Mammary epithelial cell (primary cell): ENCODE measurements at regions of chr6 and their contacts with region 1.

Region 1: DNA sequence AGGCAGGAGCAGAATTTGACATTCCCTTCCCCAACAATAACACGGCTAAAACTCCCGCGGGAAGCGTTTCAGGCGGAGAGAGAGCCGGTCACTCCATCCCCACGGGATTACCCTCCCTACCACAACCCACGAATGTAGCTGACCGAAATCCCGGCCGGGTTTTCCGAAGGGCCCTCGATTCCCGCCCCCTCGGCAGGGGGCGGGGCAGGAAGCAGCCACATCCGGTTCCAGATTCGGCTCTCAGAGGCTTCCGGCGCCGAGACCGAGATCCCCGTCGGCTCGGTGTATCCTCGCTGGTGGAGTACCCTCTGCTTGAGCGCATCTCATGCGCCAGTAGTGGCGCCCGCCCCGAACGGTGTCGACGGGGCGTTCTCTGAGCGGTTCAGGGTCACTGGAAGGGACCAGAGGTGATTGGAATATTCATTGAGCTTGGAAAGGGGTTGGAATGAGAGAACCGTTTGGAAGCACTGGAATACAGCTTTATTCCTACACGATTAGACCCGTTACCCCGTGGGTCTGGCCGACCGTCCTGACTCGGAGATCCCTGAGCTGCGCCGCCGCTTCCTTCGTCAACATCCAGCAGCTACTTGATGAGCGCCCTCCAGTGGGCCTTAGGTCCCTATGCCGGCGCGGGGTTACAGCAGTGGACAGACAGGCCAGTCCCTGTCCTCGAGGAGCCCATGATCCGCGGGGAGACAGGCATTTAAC is 649 bp upstream of the RGL2 start:
- DNase-seq: peak; percentile 90
- H3K4me3 ChIP-seq: peak overlapping the region; percentile 73 to 98 (median 83)
- H3K27ac ChIP-seq: peak overlapping the region; percentile 93
- H3K4me1 ChIP-seq: peaks cover 9% of the 10 kb centered on the region
- H3K27me3 ChIP-seq: no peaks in the 10 kb centered on the region
- CTCF ChIP-seq: peak; percentile 71 to 82

Region 2: DNA sequence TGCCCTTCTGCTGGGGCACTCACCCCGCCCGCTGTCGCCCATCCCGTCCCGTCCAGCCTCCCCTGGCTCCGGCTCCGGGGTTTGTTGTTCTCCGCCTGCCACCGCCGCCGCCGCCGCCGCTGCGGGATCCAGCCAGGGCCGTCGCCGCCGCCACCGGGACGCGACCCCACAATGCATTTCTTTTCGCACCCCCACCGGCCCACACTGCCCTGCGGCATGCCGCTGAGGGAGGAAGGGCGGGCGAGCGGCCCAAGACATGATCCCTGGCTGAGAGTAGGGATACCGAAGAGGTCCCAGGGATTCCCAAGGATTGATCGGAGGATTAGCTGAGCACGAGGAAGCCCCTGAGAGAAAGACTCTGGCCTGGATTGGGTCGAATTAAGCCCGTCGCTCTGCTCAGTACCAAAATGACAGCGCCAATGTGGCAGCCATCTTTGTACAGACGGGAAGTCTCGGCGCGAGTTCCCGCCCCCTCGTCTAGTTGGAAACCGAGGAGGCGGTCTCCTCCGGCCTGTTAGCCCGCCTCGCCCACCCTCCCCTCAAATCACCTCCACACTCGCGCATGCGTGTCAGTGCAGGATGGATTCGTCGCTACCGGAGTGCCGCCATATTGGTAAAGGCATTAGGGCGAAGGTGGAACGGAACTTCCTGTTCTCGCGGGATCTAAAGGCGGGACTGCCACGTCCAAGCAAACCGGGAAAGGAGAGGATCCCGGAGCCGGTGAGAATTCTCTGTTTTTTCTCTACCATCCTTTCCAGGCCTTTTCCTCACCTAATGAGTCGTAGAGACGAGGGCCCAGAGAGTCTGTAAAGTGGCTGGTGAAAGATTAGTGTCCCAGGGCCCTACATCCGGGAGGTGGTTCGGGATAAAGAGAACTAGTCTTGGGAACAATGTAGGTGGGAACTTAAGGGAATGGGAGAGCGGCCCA is 98.9 kb before region 1 on chr6 and contains the starts of genes RXRB and SLC39A7:
- CTCF ChIA-PET with region 1: no interaction called
- dilution Hi-C with region 1: no loop called
- in situ Hi-C with region 1: no loop called
- intact Hi-C with region 1: loop called (anchors 1 kb)
- DNase-seq: peak; percentile 99
- H3K4me3 ChIP-seq: peak within 1 kb of the TSS; percentile 77 to 97 (median 78)
- H3K27ac ChIP-seq: peak within 1 kb of the TSS; percentile 88
- H3K4me1 ChIP-seq: peaks cover 23% of the 10 kb centered on the region
- H3K27me3 ChIP-seq: no peaks in the 10 kb centered on the region
- CTCF ChIP-seq: no peak
- total RNA-seq, gene RXRB: 15.0 to 30.7 TPM
- total RNA-seq, gene SLC39A7: 52.8 to 99.3 TPM

Region 3: GRCh38 chr6:33279971-33280511 is 19.4 kb before region 1 on chr6:
- CTCF ChIA-PET with region 1: no interaction called
- dilution Hi-C with region 1: no loop called
- in situ Hi-C with region 1: no loop called
- intact Hi-C with region 1: loop called (anchors 1 kb)
- DNase-seq: peak; percentile 64
- H3K4me3 ChIP-seq: no peak overlapping the region
- H3K27ac ChIP-seq: no peak overlapping the region
- H3K4me1 ChIP-seq: peaks cover 18% of the 10 kb centered on the region
- H3K27me3 ChIP-seq: no peaks in the 10 kb centered on the region
- CTCF ChIP-seq: peak; percentile 78

Region 4: GRCh38 chr6:33288921-33289748 is 10.3 kb before region 1 on chr6 and contains the starts of genes PFDN6 and WDR46:
- CTCF ChIA-PET with region 1: no interaction called
- dilution Hi-C with region 1: no loop called
- in situ Hi-C with region 1: no loop called
- intact Hi-C with region 1: loop called (anchors 1 kb)
- DNase-seq: peak; percentile 90
- H3K4me3 ChIP-seq: peak within 1 kb of the TSS; percentile 69 to 92 (median 76)
- H3K27ac ChIP-seq: peak within 1 kb of the TSS; percentile 66
- H3K4me1 ChIP-seq: peaks cover 17% of the 10 kb centered on the region
- H3K27me3 ChIP-seq: no peaks in the 10 kb centered on the region
- CTCF ChIP-seq: no peak
- total RNA-seq, gene PFDN6: 15.2 to 59.2 TPM
- total RNA-seq, gene WDR46: 55.0 to 55.3 TPM

Region 5: GRCh38 chr6:33317669-33318425 is 18.5 kb after region 1 on chr6 and contains the start of gene ZBTB22:
- CTCF ChIA-PET with region 1: interaction called, 4 read pairs
- dilution Hi-C with region 1: no loop called
- in situ Hi-C with region 1: no loop called
- intact Hi-C with region 1: loop called (anchors 1 kb)
- DNase-seq: peak; percentile 98
- H3K4me3 ChIP-seq: peak within 1 kb of the TSS; percentile 45 to 57 (median 51)
- H3K27ac ChIP-seq: peak within 1 kb of the TSS; percentile 65
- H3K4me1 ChIP-seq: peaks cover 51% of the 10 kb centered on the region
- H3K27me3 ChIP-seq: no peaks in the 10 kb centered on the region
- CTCF ChIP-seq: no peak
- total RNA-seq, gene ZBTB22: 11.5 to 16.3 TPM

Region 6: DNA sequence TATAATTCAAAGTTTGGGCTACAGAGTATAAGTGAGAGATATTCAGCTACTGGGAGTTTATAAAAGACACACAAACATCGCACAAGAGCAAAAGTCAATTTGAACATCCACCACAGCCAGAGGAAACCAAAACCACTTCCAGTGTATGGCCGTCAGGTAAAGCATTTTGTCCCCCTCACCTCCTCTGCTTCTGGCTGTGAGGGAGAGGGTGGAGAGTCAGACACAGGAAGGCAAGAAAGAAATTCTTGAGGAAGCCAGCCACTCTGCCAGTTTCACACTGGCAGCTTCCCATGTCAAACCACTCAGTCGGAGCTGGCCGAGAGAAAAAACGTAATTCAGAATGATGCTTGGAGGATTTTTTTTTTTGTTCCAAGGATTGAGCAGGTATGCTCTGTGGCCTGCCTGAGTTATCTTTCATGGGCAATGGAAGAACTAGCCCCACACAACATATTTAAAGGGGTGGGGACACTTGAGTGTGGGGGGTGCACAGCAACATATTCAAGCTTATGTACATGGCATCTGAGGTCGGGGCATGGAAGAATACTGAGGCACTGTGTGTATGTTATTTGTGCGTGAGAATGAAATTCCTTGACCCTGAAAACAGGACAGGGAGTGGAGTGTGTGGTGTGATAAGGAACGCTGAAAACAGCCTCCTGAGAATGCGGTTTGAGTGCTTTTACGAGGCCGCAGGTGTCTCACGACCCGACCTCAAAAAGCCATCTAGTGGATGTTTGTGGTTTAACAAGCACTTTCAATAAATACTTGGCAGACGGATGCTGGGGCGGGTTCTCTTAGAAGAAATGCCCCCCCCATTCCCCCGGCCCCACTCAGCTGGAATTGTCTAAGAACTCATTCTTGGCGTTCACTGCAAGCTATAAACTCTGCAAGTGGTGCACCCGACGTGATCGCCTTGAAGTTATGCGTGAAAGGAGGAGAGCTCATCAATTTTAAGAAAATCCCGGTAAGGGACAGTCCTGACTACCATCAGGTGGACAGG is 45.6 kb after region 1 on chr6:
- CTCF ChIA-PET with region 1: no interaction called
- dilution Hi-C with region 1: no loop called
- in situ Hi-C with region 1: no loop called
- intact Hi-C with region 1: loop called (anchors 1 kb)
- DNase-seq: peak; percentile 76
- H3K4me3 ChIP-seq: no peak overlapping the region
- H3K27ac ChIP-seq: no peak overlapping the region
- H3K4me1 ChIP-seq: peaks cover 10% of the 10 kb centered on the region
- H3K27me3 ChIP-seq: no peaks in the 10 kb centered on the region
- CTCF ChIP-seq: peak; percentile 33 to 65

Region 7: GRCh38 chr6:33375143-33375671 is 75.8 kb after region 1 on chr6:
- CTCF ChIA-PET with region 1: no interaction called
- dilution Hi-C with region 1: no loop called
- in situ Hi-C with region 1: no loop called
- intact Hi-C with region 1: no loop called
- DNase-seq: peak; percentile 73
- H3K4me3 ChIP-seq: no peak overlapping the region
- H3K27ac ChIP-seq: peak overlapping the region; percentile 60
- H3K4me1 ChIP-seq: peaks cover 25% of the 10 kb centered on the region
- H3K27me3 ChIP-seq: no peaks in the 10 kb centered on the region
- CTCF ChIP-seq: no peak

Region 8: GRCh38 chr6:33425668-33426577 is 126.5 kb after region 1 on chr6:
- CTCF ChIA-PET with region 1: no interaction called
- dilution Hi-C with region 1: no loop called
- in situ Hi-C with region 1: no loop called
- intact Hi-C with region 1: loop called (anchors 1 kb)
- DNase-seq: peak; percentile 82
- H3K4me3 ChIP-seq: peak overlapping the region; percentile 55 to 72 (median 68)
- H3K27ac ChIP-seq: peak overlapping the region; percentile 68
- H3K4me1 ChIP-seq: peaks cover 42% of the 10 kb centered on the region
- H3K27me3 ChIP-seq: no peaks in the 10 kb centered on the region
- CTCF ChIP-seq: peak; percentile 36 to 81

Region 9: GRCh38 chr6:33672808-33673207 is 373.4 kb after region 1 on chr6:
- CTCF ChIA-PET with region 1: no interaction called
- dilution Hi-C with region 1: no loop called
- in situ Hi-C with region 1: no loop called
- intact Hi-C with region 1: no loop called
- DNase-seq: peak; percentile 88
- H3K4me3 ChIP-seq: no peak overlapping the region
- H3K27ac ChIP-seq: no peak overlapping the region
- H3K4me1 ChIP-seq: peaks cover 16% of the 10 kb centered on the region
- H3K27me3 ChIP-seq: no peaks in the 10 kb centered on the region
- CTCF ChIP-seq: peak in 1 of 2 donors; percentile 59